AG04449 (cell line): ENCODE measurements at regions of chr5 and their contacts with region 1.

Region 1: DNA sequence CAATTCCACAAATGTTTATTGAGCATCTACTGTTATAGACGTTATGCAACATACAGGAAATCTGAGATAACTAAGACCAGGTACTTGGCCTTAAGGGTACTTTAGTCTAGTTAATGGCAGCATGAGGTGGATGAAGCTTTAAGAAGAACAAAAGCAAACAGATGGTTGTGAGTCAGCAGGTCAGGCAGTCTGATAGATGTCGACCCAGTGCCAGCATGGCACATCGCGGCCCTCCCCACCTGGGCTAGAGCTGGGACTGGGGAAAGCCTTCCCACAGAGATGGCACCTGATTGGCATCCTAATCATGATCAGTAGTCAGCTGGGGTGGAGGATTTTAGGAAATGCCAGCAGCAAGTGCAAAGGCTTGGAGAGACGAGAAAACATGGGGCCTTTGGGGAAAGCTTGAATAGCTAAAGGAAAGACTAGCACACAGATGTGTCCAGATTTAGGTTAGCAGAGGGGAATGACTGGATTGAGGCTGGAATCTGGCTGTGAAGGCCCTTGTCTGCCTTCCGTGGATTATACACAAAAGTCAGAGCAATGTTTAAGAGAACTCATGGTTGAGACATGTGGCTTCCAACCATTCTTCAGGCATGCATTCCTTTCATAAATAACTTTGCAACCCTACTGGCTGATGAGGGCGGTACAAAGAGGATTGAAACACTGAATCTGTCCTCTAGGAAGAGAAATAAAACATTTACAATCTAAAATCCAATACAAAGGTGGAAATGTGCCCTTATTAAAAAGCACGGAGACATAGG is 395.4 kb upstream of the WWC1 start:
- DNase-seq: peak; percentile 24
- H3K4me3 ChIP-seq: no peak overlapping the region
- CTCF ChIP-seq: peak; percentile 3

Region 2: GRCh38 chr5:167905919-167906853 is 10.1 kb after region 1 on chr5:
- CTCF ChIA-PET with region 1: interaction called, 13 read pairs
- POLR2A ChIA-PET with region 1: no interaction called
- DNase-seq: no peak
- H3K4me3 ChIP-seq: no peak overlapping the region
- CTCF ChIP-seq: no peak